HCT116 (cell line): ENCODE measurements at regions of chr12 and their contacts with region 1.

Region 1: GRCh38 chr12:45745861-45746277 is 16.4 kb downstream of the ARID2 start:
- DNase-seq: no peak
- ATAC-seq: peak; percentile 59
- H3K4me3 ChIP-seq: no peak overlapping the region
- H3K27ac ChIP-seq: no peak overlapping the region
- H3K4me1 ChIP-seq: peaks cover 0 to 3% of the 10 kb centered on the region in 2 experiments; a peak in 1 of 4 replicates
- H3K27me3 ChIP-seq: no peaks in the 10 kb centered on the region
- CTCF ChIP-seq: peak in 2 of 3 experiments; percentile 26 to 28; a peak in 3 of 6 replicates
- POLR2A ChIP-seq: no peak
- RAD21 ChIP-seq: no peak

Region 2: DNA sequence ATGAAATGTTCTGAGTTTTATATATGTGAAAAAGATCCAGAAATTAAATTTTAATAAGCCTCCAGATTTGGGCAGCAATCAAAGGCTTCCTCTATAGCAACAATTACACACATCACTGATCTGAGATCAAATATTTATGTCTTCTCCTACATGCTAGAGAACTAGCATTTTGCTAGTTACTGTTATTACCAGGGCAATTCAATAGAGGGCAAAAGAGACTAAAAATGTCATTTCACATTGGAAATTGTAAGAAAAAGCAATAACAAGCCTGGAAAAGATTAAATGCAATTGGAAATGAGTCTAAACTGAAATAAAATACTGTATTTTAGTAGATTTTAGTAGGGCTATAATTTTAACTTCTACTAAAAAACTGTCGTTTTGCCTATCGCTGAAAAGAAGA is 562.6 kb before region 1 on chr12:
- CTCF ChIA-PET with region 1: no interaction called
- POLR2A ChIA-PET with region 1: no interaction called
- RAD21 ChIA-PET with region 1: no interaction called
- intact Hi-C with region 1: loop called (anchors 5 kb)
- DNase-seq: no peak
- ATAC-seq: no peak
- H3K4me3 ChIP-seq: no peak overlapping the region
- H3K27ac ChIP-seq: no peak overlapping the region
- H3K4me1 ChIP-seq: no peaks in the 10 kb centered on the region
- H3K27me3 ChIP-seq: no peaks in the 10 kb centered on the region
- CTCF ChIP-seq: peak; percentile 6 to 43 (median 27); a peak in 3 of 6 replicates
- POLR2A ChIP-seq: no peak
- RAD21 ChIP-seq: peak; percentile 60